Transverse colon (tissue), 4 donors: ENCODE measurements at regions of chr2 and their contacts with region 1.

Region 1: GRCh38 chr2:151551556-151551955 is 141.9 kb downstream of the RIF1 start:
- DNase-seq: no peak
- H3K4me3 ChIP-seq: no peak overlapping the region
- H3K27ac ChIP-seq: no peak overlapping the region
- H3K4me1 ChIP-seq: no peaks in the 10 kb centered on the region
- H3K27me3 ChIP-seq: no peaks in the 10 kb centered on the region
- CTCF ChIP-seq: no peak
- EP300 ChIP-seq: no peak
- POLR2A ChIP-seq: no peak

Region 2: DNA sequence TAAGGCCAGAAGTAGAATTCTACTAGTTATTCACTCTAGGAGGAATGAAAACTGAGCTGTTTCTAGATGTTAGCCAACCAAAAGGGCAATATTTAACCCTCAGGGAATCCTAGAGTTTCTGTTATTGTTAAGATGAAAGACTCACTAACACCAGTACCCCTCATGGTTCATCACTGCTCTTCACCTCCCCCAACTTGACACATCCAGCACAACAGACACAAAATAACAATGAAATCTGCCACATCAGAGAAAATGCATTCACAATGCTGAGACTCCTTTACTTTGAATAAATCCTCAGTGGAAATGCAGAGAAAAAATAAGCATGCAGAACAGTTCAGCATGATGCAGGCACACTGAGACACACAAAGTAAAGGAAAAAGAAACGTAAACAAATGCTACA is 30.6 kb before region 1 on chr2:
- in situ Hi-C with region 1: no loop called
- intact Hi-C with region 1: loop called (anchors 2 kb)
- DNase-seq: no peak
- H3K4me3 ChIP-seq: no peak overlapping the region
- H3K27ac ChIP-seq: no peak overlapping the region
- H3K4me1 ChIP-seq: no peaks in the 10 kb centered on the region
- H3K27me3 ChIP-seq: no peaks in the 10 kb centered on the region
- CTCF ChIP-seq: no peak
- EP300 ChIP-seq: no peak
- POLR2A ChIP-seq: no peak

Region 3: GRCh38 chr2:152189622-152190495 is 638.3 kb after region 1 on chr2:
- in situ Hi-C with region 1: no loop called
- intact Hi-C with region 1: no loop called
- DNase-seq: peak; percentile 35
- H3K4me3 ChIP-seq: no peak overlapping the region
- H3K27ac ChIP-seq: no peak overlapping the region
- H3K4me1 ChIP-seq: no peaks in the 10 kb centered on the region
- H3K27me3 ChIP-seq: no peaks in the 10 kb centered on the region
- CTCF ChIP-seq: peak; percentile 67 to 87 (median 76)
- EP300 ChIP-seq: no peak
- POLR2A ChIP-seq: no peak

Region 4: GRCh38 chr2:152432206-152432653 is 880.7 kb after region 1 on chr2:
- in situ Hi-C with region 1: no loop called
- intact Hi-C with region 1: no loop called
- DNase-seq: no peak
- H3K4me3 ChIP-seq: no peak overlapping the region
- H3K27ac ChIP-seq: peak overlapping the region in 1 of 4 donors; percentile 20
- H3K4me1 ChIP-seq: peaks cover 0 to 21% (median 7%) of the 10 kb centered on the region in 4 donors
- H3K27me3 ChIP-seq: no peaks in the 10 kb centered on the region
- CTCF ChIP-seq: no peak
- EP300 ChIP-seq: no peak
- POLR2A ChIP-seq: no peak